ENCODE measurements at regions of chr3 and their contacts with region 1.

Region 1: DNA sequence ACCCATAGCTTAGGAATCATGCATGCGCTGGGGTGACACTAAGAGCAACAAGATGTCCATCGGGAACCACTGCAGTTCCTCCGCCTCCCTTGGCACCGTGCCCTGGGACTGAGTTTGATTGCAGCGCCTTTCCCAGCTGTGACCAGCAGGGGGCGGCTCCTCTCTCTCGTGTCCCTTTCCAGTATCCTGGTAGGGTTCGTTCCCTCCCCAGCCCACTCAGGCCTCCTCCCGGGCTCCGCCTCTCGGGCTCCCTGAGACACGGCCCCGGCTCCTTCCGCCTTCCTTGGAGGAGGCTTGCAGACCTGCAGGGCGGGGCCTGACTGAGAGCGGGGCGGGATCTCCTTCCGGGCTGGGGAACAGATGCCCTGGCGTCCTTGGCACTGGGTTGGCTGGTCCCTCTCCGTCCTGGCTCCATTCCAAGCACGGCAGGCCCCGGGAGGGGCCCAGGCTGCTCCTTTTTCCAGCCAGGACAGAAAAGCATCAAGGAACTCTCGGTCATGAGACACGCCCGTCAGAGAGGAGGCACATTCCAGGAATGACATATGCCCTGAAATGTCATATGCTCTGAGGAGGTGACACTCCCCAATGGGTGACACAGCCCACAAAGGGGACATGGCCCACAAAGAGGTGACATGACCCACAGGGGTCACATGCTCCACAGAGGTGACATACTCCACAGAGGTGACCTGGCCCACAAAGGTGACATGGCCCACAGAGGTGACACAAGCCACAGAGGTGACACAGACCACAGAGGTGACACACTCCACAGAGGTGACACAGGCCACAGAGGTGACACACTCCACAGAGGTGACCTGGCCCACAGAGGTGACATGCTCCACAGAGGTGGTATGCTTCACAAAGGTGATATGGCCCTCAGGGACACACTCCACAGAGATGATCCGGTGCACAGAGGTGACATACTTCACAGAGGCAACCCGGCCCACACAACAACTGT is 79.0 kb downstream of the ABHD5 start:
- DNase-seq: peak; percentile 80
- CTCF ChIP-seq: peak; percentile 90

Region 2: DNA sequence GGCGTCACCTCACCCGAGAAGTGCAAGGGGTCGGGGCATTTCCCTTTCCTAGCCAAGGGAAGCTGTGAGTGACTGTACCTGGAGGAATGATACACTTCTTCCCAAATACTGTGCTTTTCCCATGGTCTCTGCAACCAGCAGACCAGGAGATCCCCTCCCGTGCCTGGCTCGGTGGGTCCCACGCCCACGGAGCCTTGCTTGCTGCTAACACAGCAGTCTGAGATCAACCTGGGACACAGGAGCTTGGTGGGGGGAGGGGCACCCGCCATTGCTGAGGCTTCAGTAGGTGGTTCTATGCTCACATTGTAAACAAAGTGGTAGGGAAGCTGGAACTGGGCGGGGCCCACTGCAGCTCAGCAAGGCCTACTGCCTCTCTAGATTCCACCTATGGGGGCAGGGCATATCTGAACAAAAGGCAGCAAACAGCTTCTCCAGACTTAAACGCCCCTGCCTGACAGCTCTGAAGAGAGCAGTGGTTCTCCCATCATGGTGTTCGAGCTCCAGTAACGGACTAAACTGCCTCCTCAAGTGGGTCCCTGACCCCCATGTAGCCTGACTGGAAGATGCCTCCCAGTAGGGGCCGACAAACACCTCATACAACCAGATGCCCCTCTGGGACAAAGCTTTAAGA is 110.4 kb before region 1 on chr3:
- CTCF ChIA-PET with region 1: no interaction called
- POLR2A ChIA-PET with region 1: no interaction called
- DNase-seq: no peak
- CTCF ChIP-seq: no peak

Region 3: DNA sequence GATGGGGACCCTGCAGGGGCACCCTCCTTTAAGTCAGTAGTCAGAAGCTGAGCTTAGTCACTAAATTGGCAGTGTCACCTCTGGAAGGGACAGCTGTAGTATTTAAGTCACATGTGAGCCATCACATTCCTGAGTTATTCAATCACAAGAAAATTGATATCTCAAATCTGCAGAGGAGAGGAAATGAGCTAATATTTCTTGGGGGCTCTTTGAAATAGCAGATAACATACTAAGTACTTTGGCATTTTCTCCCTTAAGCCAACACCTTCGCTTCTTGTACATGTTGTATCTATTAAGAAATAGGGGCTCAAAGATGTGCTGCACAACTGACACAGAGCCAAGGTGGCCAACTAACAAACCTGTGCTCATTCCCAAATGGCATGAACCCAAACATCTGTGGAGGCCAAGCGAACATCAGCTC is 16.0 kb before region 1 on chr3:
- CTCF ChIA-PET with region 1: interaction called, 14 read pairs
- POLR2A ChIA-PET with region 1: no interaction called
- DNase-seq: no peak
- CTCF ChIP-seq: no peak

Region 4: GRCh38 chr3:43759297-43759782 is 10.4 kb before region 1 on chr3:
- CTCF ChIA-PET with region 1: interaction called, 11 read pairs
- POLR2A ChIA-PET with region 1: no interaction called
- DNase-seq: no peak
- CTCF ChIP-seq: no peak

Region 5: DNA sequence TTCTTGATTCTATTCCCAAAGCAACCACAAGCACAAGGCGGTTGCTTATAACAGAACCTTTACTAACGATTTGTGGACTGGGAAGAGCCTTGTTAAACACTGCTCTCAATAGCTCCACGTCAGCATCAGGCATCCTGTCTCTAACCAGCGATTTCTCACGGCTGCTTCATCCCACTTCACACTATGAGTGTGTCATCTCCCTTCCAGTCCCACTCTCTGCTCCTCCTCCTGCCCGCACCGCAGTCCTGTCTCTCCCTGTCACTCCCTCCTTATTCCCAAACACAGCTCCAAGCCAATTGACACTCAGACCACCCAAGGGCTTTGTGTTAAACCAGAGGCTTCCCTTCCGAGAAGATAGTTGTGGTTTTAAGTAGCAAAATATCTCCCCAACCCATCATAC is 15.8 kb after region 1 on chr3:
- CTCF ChIA-PET with region 1: interaction called, 17 read pairs
- POLR2A ChIA-PET with region 1: no interaction called
- DNase-seq: no peak
- CTCF ChIP-seq: no peak

Region 6: DNA sequence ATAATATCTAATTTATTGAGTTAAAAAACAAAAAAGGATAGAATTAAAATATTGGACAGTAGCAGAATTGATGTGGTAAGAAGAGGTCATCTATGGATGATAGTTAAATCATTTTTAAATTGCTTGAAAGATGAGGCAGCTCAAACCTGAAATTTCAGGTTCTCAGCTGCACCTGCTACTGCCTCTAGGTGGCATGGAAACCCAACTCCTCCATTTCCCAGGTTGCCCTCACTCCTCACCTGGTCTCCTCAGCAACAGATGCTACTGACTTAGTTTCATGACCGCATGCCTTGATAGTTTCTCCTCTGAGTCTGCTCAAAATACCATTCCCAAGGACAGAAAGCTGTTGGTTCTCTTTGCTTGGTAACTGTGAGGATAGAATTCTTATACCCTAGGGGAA is 69.1 kb after region 1 on chr3:
- CTCF ChIA-PET with region 1: no interaction called
- POLR2A ChIA-PET with region 1: no interaction called
- DNase-seq: no peak
- CTCF ChIP-seq: no peak

Region 7: GRCh38 chr3:44198284-44199269 is 428.8 kb after region 1 on chr3:
- CTCF ChIA-PET with region 1: interaction called, 29 read pairs
- POLR2A ChIA-PET with region 1: no interaction called
- DNase-seq: peak; percentile 77
- CTCF ChIP-seq: peak; percentile 81

Region 8: GRCh38 chr3:44272191-44272590 is 502.4 kb after region 1 on chr3:
- CTCF ChIA-PET with region 1: no interaction called
- POLR2A ChIA-PET with region 1: interaction called, 14 read pairs
- DNase-seq: no peak
- CTCF ChIP-seq: no peak

Measured in GM10248 (cell line).